ENCODE measurements at regions of chr18 and their contacts with region 1.

Region 1: GRCh38 chr18:70089858-70090257 is 115.6 kb downstream of the RTTN start:
- DNase-seq: no peak

Region 2: DNA sequence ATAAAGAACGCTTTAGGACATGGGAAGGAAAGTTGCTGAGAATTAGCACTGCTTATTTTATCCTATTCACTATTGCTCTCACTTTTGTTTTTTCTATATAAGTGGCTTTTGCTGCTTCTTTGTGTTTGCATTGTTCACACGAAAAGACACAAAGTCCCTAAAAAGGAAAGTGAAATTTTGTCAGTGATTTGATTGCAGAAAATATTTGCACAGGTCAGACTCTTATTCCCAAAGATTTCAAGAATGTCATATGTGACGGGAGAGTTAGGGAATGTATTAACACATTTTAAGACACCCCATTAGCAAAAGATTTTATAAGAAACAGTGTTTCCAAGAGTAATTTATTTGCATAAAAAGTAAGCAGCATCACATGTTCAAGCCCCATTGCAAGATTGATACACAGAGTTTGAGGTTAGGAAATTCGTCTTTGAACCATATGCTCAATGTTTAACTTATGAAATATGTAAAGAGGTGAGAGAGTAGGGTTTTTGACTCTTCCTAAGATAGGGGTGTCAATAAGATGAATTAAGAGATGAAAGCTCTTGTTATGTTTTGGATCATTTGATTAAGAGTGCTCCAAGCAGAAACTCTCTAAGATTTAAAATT is 1235.0 kb before region 1 on chr18:
- intact Hi-C with region 1: loop called in 1 of 2 experiments (anchors 10 kb)
- DNase-seq: no peak